ENCODE measurements at regions of chr1 and their contacts with region 1.

Region 1: DNA sequence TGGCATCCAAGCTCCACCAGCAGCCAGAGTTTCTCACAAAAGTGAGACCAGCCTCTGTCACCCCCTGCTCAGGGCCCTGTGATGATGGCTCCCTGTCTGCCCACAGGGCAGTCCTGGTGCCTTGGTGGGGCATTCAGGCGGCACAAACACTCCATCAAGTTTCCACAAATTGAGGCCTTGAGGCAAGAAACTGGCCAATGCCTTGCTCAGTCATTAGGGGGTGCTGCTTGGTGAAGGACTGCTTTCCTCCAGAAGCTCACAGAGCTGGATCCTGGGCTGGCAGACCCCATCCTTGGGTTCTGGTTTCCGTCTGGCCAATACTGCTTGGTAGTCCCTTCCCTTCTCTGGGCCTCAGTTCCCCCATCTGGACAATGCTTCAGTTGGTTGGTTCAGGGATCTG is 12.5 kb upstream of the AHDC1 start:
- DNase-seq: peak in 1 of 4 donors; percentile 31
- ATAC-seq: no peak
- H3K4me3 ChIP-seq: no peak overlapping the region
- H3K27ac ChIP-seq: peak overlapping the region in 1 of 2 donors; percentile 5
- H3K4me1 ChIP-seq: peaks cover 0 to 71% of the 10 kb centered on the region in 2 donors
- H3K27me3 ChIP-seq: no peaks in the 10 kb centered on the region
- CTCF ChIP-seq: no peak

Region 2: GRCh38 chr1:27300341-27301051 is 315.9 kb before region 1 on chr1:
- intact Hi-C with region 1: loop called in 1 of 2 experiments (anchors 10 kb)
- DNase-seq: peak; percentile 84 to 97 (median 94)
- ATAC-seq: peak; percentile 94
- H3K4me3 ChIP-seq: no peak overlapping the region
- H3K27ac ChIP-seq: peak overlapping the region; percentile 60 to 68
- H3K4me1 ChIP-seq: peaks cover 19 to 21% of the 10 kb centered on the region in 2 donors
- H3K27me3 ChIP-seq: no peaks in the 10 kb centered on the region
- CTCF ChIP-seq: peak; percentile 97 to 100